ENCODE measurements at regions of chr3 and their contacts with region 1.

Region 1: DNA sequence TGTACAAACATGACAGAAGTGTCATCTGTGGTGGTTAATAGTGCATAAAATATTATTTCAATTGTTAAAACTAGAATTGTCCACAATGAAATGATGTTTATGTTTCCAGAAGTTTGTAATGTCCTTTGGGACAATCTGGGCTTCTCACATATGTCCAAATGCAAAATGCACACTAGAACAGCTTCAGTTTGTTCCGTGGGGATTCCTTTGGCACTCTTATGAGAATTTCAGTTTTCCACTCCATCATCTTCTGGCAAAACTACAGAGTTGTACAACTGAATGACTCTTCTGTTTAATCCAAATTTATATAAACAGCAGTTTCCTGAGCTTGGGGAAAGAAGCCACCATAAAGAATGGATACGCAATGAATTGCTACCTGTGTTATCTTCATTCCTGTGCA is 2.0 kb upstream of the OR5H6 start:
- DNase-seq: no peak
- ATAC-seq: no peak
- H3K4me3 ChIP-seq: no peak overlapping the region
- H3K4me3 Mint-ChIP-seq: no peak overlapping the region
- H3K27ac ChIP-seq: no peak overlapping the region
- H3K27ac Mint-ChIP-seq: no peak overlapping the region
- H3K4me1 ChIP-seq: no peaks in the 10 kb centered on the region
- H3K4me1 Mint-ChIP-seq: no peaks in the 10 kb centered on the region
- H3K27me3 ChIP-seq: no peaks in the 10 kb centered on the region
- H3K27me3 Mint-ChIP-seq: peaks cover 9% of the 10 kb centered on the region
- CTCF ChIP-seq: no peak

Region 2: GRCh38 chr3:97579365-97579764 is 682.7 kb before region 1 on chr3:
- CTCF ChIA-PET with region 1: no interaction called
- POLR2A ChIA-PET with region 1: no interaction called
- intact Hi-C with region 1: no loop called
- DNase-seq: no peak
- ATAC-seq: no peak
- H3K4me3 ChIP-seq: no peak overlapping the region
- H3K4me3 Mint-ChIP-seq: no peak overlapping the region
- H3K27ac ChIP-seq: no peak overlapping the region
- H3K27ac Mint-ChIP-seq: no peak overlapping the region
- H3K4me1 ChIP-seq: no peaks in the 10 kb centered on the region
- H3K4me1 Mint-ChIP-seq: no peaks in the 10 kb centered on the region
- H3K27me3 ChIP-seq: no peaks in the 10 kb centered on the region
- H3K27me3 Mint-ChIP-seq: no peaks in the 10 kb centered on the region
- CTCF ChIP-seq: no peak

Region 3: DNA sequence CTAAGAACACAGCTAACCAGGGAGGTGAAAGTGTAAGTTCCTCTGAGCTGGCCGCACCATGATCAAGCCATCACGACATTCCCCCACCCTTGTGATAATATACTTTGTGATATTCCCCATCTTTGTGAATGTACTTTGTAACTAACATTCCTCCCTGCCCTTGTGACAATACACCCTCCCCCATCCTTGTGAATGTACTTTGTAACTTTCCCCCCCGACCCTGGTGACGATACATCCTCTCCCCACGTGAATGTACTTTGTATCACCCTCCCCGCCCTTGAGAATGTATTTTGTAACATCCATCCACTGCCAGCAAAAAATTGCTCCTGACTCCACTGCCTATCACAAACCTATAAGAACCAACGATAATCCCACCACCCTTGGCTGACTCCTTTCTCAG is 18.2 kb before region 1 on chr3:
- CTCF ChIA-PET with region 1: no interaction called
- POLR2A ChIA-PET with region 1: no interaction called
- intact Hi-C with region 1: loop called in 1 of 2 experiments (anchors 2 kb)
- DNase-seq: no peak
- ATAC-seq: no peak
- H3K4me3 ChIP-seq: no peak overlapping the region
- H3K4me3 Mint-ChIP-seq: no peak overlapping the region
- H3K27ac ChIP-seq: no peak overlapping the region
- H3K27ac Mint-ChIP-seq: no peak overlapping the region
- H3K4me1 ChIP-seq: no peaks in the 10 kb centered on the region
- H3K4me1 Mint-ChIP-seq: no peaks in the 10 kb centered on the region
- H3K27me3 ChIP-seq: no peaks in the 10 kb centered on the region
- H3K27me3 Mint-ChIP-seq: no peaks in the 10 kb centered on the region
- CTCF ChIP-seq: no peak

Region 4: DNA sequence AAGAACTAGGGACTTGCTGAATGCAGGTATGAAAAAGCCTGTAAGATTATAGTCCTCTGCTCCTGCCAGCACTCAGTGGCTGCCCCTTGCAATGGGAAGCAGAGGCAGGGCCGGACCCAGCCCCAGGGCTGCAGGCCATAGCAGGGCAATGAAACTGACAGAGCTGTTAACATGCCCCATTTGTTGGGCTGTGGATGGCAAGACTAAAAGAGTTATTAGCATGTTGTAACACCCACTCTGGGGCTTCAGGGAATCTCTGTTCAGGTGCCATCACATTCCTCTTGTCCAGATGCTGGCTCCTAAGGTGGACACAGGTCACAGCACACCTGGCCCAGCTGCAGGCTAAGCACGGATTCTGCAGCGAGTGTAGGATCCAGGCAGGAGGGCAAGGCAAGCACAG is 12.9 kb after region 1 on chr3:
- CTCF ChIA-PET with region 1: no interaction called
- POLR2A ChIA-PET with region 1: no interaction called
- intact Hi-C with region 1: no loop called
- DNase-seq: no peak
- ATAC-seq: no peak
- H3K4me3 ChIP-seq: no peak overlapping the region
- H3K4me3 Mint-ChIP-seq: no peak overlapping the region
- H3K27ac ChIP-seq: no peak overlapping the region
- H3K27ac Mint-ChIP-seq: no peak overlapping the region
- H3K4me1 ChIP-seq: no peaks in the 10 kb centered on the region
- H3K4me1 Mint-ChIP-seq: no peaks in the 10 kb centered on the region
- H3K27me3 ChIP-seq: no peaks in the 10 kb centered on the region
- H3K27me3 Mint-ChIP-seq: peaks cover 2% of the 10 kb centered on the region
- CTCF ChIP-seq: no peak

Region 5: DNA sequence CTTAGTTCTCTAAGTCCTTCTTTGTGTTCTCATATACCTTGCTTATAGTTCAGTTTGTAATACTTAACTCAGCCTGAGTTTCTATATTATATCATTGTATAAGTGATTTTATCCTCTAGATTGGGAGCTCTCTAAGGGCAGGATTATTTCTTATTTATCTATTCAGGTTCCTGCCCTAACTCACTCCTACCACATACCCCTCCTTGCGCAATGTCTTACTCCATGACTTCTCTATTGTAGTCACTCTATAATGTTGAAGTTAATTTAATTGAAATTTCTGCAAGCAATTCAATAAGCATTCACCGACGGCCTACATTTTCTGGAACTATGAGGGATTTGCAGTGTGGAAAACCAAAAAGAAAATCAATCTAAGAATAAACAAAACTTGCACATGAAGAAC is 88.0 kb after region 1 on chr3:
- CTCF ChIA-PET with region 1: no interaction called
- POLR2A ChIA-PET with region 1: no interaction called
- intact Hi-C with region 1: no loop called
- DNase-seq: no peak
- ATAC-seq: no peak
- H3K4me3 ChIP-seq: no peak overlapping the region
- H3K4me3 Mint-ChIP-seq: no peak overlapping the region
- H3K27ac ChIP-seq: no peak overlapping the region
- H3K27ac Mint-ChIP-seq: no peak overlapping the region
- H3K4me1 ChIP-seq: no peaks in the 10 kb centered on the region
- H3K4me1 Mint-ChIP-seq: no peaks in the 10 kb centered on the region
- H3K27me3 ChIP-seq: no peaks in the 10 kb centered on the region
- H3K27me3 Mint-ChIP-seq: peaks cover 2% of the 10 kb centered on the region
- CTCF ChIP-seq: no peak

Region 6: DNA sequence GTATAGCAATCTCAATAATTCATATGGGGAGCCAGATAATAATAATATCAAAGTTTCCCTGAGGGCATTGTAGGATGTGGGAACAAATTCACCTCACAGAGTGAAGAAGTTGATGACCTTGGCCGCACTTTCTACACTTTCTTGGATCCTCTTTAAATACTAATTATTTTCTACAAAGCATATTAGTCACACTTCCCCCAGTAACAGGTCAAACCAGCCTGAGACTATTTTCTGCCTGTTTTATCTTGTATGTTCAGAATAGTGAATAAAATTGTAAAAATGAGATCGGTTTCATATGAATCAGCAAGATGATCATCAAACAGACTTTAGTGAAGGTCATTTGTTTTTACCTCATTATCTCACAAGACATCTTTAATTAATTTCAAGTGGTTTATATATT is 126.1 kb after region 1 on chr3:
- CTCF ChIA-PET with region 1: no interaction called
- POLR2A ChIA-PET with region 1: no interaction called
- intact Hi-C with region 1: no loop called
- DNase-seq: no peak
- ATAC-seq: no peak
- H3K4me3 ChIP-seq: no peak overlapping the region
- H3K4me3 Mint-ChIP-seq: no peak overlapping the region
- H3K27ac ChIP-seq: no peak overlapping the region
- H3K27ac Mint-ChIP-seq: no peak overlapping the region
- H3K4me1 ChIP-seq: no peaks in the 10 kb centered on the region
- H3K4me1 Mint-ChIP-seq: no peaks in the 10 kb centered on the region
- H3K27me3 ChIP-seq: no peaks in the 10 kb centered on the region
- H3K27me3 Mint-ChIP-seq: peaks cover 21% of the 10 kb centered on the region
- CTCF ChIP-seq: no peak